ENCODE measurements at regions of chr5 and their contacts with region 1.

Region 1: DNA sequence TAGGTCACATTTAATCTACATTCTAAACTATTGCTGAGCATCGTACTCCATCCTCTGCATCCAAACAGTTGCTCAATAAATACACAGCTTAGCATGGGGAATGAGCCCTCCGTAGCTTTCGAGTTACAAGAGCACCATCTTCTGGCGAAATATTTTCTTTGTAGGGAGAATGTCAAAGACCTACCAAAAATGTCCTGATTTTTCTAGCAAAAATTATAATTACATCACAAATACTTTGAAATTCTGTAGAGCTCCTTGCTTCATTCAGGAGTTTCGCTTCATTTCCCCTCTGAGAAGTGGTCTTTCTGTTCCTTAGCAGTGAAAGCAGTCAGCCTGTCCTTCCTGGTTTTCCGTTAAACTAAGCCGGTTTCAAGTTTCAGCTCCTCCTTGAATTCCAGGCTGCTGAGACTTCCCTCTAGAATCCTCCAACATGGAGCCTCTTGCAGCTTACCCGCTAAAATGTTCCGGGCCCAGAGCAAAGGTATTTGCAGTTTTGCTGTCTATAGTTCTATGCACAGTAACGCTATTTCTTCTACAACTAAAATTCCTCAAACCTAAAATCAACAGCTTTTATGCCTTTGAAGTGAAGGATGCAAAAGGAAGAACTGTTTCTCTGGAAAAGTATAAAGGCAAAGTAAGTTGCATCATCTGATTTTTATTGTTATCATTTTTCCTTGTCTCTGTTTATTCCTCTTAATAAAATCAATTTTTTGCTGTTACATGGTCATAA is at the start of gene GPX8:
- DNase-seq: peak; percentile 41
- H3K4me3 Mint-ChIP-seq: peak within 1 kb of the TSS; percentile 76
- H3K27ac Mint-ChIP-seq: peak within 1 kb of the TSS; percentile 72
- H3K4me1 Mint-ChIP-seq: peaks cover 6% of the 10 kb centered on the region
- H3K27me3 Mint-ChIP-seq: no peaks in the 10 kb centered on the region
- CTCF ChIP-seq: peak; percentile 36
- total RNA-seq, gene GPX8: 17.8 and 25.9 TPM in 2 replicates

Region 2: DNA sequence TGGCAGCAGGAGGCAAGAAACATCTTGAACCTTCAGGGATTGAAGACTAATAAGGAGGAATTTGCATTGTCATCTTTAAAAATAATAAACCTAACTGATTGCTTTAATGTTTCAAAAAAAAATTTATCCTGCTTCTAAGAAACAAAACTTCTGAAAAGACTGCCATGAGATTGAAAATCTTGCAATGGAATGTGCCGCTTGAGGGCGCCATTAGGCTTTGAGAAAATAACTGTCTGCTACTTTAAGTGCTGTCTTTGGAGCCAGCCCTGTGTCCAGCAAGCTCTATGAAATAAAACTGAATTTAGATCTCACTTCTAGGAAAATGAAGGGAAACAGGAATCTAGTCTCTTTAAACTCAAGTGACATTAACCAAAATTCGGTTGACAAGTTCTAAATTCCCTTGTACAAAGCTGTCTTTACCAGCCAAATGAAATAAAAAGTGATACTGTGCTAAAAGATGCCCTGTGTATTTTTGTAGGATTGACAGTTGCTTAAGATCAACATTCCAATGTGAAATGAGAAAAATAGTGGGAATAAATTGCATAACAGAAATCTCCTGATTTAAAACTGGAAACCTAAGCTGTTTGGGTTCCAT is 253.9 kb before region 1 on chr5:
- CTCF ChIA-PET with region 1: interaction called, 33 read pairs
- intact Hi-C with region 1: loop called (anchors 1 kb)
- DNase-seq: peak; percentile 68
- H3K4me3 Mint-ChIP-seq: no peak overlapping the region
- H3K27ac Mint-ChIP-seq: no peak overlapping the region
- H3K4me1 Mint-ChIP-seq: no peaks in the 10 kb centered on the region
- H3K27me3 Mint-ChIP-seq: peaks cover 94% of the 10 kb centered on the region
- CTCF ChIP-seq: peak; percentile 13

Region 3: GRCh38 chr5:54944364-54944763 is 215.6 kb before region 1 on chr5:
- CTCF ChIA-PET with region 1: interaction called, 35 read pairs
- intact Hi-C with region 1: no loop called
- DNase-seq: peak; percentile 21
- H3K4me3 Mint-ChIP-seq: no peak overlapping the region
- H3K27ac Mint-ChIP-seq: no peak overlapping the region
- H3K4me1 Mint-ChIP-seq: no peaks in the 10 kb centered on the region
- H3K27me3 Mint-ChIP-seq: peaks cover 48% of the 10 kb centered on the region
- CTCF ChIP-seq: peak; percentile 67